ENCODE measurements at regions of chr11 and their contacts with region 1.

Region 1: DNA sequence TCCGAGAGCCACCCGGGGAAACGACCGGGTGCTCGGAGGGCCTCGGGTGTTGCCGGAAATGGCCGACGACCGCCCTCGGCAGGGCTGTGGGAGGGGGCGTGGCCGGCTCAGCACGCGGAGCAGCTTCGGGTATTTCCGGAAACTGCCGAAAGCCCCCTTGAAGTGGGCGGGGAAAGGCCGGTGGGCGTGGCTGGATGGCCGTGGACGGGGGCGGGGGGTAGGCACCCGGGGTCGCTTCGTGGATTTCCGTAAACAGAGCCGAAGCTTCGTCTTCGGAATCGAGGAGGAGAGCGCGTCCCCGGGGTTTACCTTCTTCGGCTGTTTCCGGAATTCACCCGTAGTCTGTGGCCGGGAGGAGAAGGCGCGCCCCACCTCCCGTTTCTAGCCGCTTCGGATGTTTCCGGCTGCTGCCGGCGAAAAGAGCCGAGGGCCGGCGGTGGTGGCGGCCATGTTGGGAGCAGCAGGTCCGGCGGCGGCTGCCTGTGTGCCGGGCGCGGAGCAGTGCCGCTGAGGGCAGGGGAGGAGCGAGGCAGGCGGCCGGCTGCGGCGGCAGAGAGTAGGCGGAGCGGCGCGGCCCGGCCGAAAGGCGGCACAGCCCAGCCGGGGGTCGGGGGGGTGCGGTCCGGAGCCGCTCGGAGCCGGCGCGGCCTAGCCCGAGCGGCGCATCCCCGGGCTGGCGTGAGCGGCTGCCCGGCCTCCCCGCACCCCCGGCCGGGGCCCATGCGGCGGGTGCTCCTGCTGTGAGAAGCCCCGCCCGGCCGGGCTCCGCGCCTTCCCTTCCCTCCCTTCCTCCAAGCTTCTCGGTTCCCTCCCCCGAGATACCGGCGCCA is at the start of gene MARK2:
- DNase-seq: peak; percentile 96 to 100 (median 98)
- H3K4me3 ChIP-seq: peak within 1 kb of the TSS; percentile 63 to 95 (median 83)
- H3K27ac ChIP-seq: peak within 1 kb of the TSS; percentile 55 to 98 (median 91)
- H3K27me3 ChIP-seq: no peaks in the 10 kb centered on the region
- CTCF ChIP-seq: peak in 23 of 56 donors; percentile 1 to 57 (median 23)
- total RNA-seq, gene MARK2: 47.0 to 75.5 (median 57.9) TPM

Region 2: GRCh38 chr11:63871962-63872799 is 33.3 kb after region 1 on chr11:
- intact Hi-C with region 1: loop called (anchors 1 to 2 kb)
- DNase-seq: peak; percentile 31 to 88 (median 76)
- H3K4me3 ChIP-seq: peak overlapping the region in 22 of 59 donors; percentile 1 to 32 (median 18)
- H3K27ac ChIP-seq: peak overlapping the region in 56 of 59 donors; percentile 11 to 85 (median 69)
- H3K27me3 ChIP-seq: no peaks in the 10 kb centered on the region
- CTCF ChIP-seq: peak in 55 of 56 donors; percentile 30 to 80 (median 63)

Region 3: GRCh38 chr11:63877658-63878241 is 38.9 kb after region 1 on chr11:
- intact Hi-C with region 1: loop called in 1 of 2 experiments (anchors 2 kb)
- DNase-seq: no peak
- H3K4me3 ChIP-seq: no peak overlapping the region
- H3K27ac ChIP-seq: peak overlapping the region in 45 of 59 donors; percentile 0 to 93 (median 53)
- H3K27me3 ChIP-seq: no peaks in the 10 kb centered on the region
- CTCF ChIP-seq: no peak

Region 4: DNA sequence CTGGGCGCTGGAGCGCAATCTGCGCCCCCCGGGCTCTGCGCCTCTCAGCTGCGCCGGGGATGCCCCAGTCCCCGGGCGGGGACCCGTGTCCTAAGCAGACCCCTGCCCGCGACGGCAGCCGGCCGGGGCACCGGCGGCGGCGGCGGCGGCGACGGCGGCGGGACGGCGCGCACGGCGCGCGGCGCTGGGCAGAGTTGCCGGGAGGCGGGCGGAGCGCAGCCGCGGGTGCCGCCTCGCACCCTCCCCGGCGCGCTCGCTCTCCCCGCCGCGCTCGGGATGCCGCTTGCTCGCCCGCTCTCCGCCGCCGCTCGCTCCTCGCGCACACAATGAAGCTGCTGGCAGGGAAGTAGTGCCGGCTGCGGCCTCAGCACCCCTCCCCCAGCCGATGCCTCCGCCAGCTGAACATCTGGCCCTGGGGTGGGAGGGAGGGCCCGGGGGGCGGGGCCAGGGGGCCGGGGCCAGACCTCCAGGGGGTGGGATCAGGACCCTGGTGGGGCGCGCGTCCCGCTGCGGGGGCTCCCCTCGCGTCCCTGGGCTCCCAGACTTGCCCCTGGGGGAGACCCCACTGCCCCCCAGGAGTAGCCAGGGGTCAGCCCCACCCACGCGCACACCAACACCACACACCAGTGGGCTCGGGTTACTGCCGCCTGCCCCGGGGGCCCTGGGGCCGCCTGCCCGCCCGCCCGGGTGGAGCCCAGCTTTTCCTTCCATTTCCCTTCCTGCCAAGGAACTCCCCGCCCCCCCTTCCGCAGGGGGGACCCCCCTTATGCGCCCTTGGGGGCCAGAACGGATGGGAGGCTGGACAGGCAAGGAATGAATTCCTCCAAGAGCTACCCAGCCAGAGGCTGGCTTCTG is 78.2 kb after region 1 on chr11 and contains the start of gene RCOR2:
- intact Hi-C with region 1: loop called (anchors 2 to 5 kb)
- DNase-seq: peak; percentile 68 to 92 (median 84)
- H3K4me3 ChIP-seq: peak within 1 kb of the TSS; percentile 46 to 80 (median 63)
- H3K27ac ChIP-seq: peak within 1 kb of the TSS; percentile 63 to 99 (median 95)
- H3K27me3 ChIP-seq: no peaks in the 10 kb centered on the region
- CTCF ChIP-seq: peak in 4 of 56 donors; percentile 7 to 21 (median 12)
- total RNA-seq, gene RCOR2: 4.7 to 20.2 (median 10.9) TPM

Region 5: GRCh38 chr11:63945477-63946163 is 106.7 kb after region 1 on chr11:
- intact Hi-C with region 1: loop called (anchors 1 kb)
- DNase-seq: peak; percentile 38 to 79 (median 72)
- H3K4me3 ChIP-seq: peak overlapping the region in 32 of 59 donors; percentile 1 to 44 (median 20)
- H3K27ac ChIP-seq: peak overlapping the region in 52 of 59 donors; percentile 5 to 84 (median 60)
- H3K27me3 ChIP-seq: no peaks in the 10 kb centered on the region
- CTCF ChIP-seq: peak; percentile 71 to 96 (median 88)

Measured in dorsolateral prefrontal cortex (tissue), 120 donors.